ENCODE measurements at regions of chr15 and their contacts with region 1.

Region 1: GRCh38 chr15:68672781-68673205 is 94.0 kb downstream of the CORO2B start:
- DNase-seq: no peak
- ATAC-seq: no peak

Region 2: GRCh38 chr15:68559345-68560310 is 113.2 kb before region 1 on chr15:
- intact Hi-C with region 1: loop called (anchors 1 kb)
- DNase-seq: peak; percentile 93
- ATAC-seq: peak; percentile 93

Region 3: GRCh38 chr15:68631601-68632051 is 41.2 kb before region 1 on chr15:
- intact Hi-C with region 1: loop called (anchors 5 kb)
- DNase-seq: peak; percentile 71
- ATAC-seq: peak; percentile 62

Region 4: GRCh38 chr15:68730471-68730919 is 57.7 kb after region 1 on chr15:
- intact Hi-C with region 1: no loop called
- DNase-seq: no peak
- ATAC-seq: peak; percentile 33

Region 5: DNA sequence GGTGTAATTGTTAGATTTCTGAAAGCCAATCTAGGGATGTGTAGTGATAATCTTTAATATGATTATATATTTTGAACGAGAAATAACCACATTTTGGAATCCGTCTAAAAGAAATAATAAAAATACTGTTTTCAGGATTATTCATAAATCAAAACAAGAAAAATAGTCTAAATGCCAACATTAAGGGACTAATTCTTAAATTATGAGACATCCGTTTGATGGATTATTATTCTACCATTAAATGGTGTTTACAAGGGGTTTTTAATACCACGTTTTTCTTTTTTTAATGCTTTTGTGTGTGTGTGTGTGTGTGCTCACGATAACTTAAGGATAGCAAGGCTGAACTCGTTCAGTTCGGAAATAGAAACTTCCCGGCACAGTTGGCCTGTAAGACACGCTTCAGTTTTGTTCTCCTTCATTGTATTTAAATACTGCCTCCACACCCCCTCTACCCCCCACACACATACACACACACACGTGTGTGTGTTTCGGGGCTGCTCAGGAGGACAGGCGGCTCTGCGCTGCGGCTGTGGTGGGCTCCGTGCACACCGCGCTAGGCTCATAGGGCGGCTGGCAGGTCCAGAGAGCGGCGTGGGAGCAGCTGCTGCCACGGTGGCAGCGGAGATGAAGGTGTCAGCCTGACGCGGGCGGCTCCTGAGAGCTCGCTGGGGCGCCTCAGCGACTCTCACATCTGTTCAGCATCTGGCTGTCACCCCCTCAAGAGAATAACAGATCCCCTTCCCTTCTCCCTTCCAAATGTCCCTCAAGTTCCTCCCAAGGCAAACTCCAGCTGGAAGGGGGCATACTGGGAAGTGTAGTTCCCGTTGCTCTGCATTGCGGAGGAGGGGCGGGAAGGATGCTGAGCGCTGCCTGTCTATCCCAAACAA is 170.9 kb after region 1 on chr15:
- intact Hi-C with region 1: no loop called
- DNase-seq: peak; percentile 57
- ATAC-seq: peak; percentile 31

Measured in Right ventricle myocardium inferior (tissue), 1 donor.